Ovary (tissue), 10 donors: ENCODE measurements at regions of chrX and their contacts with region 1.

Region 1: DNA sequence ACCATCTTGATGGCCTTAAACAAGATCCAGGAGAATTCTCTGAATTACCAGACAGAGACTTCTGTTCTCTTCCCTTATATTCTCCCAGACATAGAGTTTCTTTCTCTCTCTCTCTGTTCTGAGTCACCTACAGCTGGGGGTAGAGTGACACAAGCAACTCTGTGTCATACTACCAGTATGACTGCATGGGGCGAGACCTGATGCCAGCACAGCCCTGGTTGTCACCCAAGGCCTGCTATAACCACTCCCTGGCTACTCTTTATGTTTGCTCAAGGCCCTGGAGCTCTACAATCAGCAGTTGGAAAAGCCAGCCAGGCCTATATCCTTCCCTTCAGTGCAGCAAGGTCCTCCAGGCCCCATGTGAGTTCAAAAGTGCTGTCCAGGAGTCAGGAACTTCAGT is 114.2 kb upstream of the TENT5D start:
- DNase-seq: no peak
- H3K4me3 ChIP-seq: no peak overlapping the region
- H3K27ac ChIP-seq: no peak overlapping the region
- H3K4me1 ChIP-seq: no peaks in the 10 kb centered on the region
- H3K27me3 ChIP-seq: no peaks in the 10 kb centered on the region
- CTCF ChIP-seq: no peak
- EP300 ChIP-seq: no peak
- POLR2A ChIP-seq: no peak

Region 2: DNA sequence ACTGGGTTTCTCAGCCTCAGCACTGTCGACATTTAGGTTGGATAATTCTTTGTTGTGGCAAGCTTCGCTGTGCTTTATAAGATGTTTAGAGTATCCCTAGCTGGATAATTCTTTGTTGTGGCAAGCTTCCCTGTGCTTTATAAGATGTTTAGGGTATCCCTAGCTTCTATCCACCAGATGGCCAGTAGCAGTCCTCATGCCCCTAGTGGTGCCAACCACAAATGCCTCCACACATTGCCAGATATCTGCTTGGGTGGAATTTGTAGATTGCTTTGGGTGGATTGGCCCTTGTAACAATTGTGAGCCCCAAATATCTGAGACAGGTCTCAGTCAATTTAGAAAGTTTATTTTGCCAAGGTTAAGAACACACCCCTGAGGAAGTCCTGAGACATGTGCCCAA is 97.5 kb after region 1 on chrX:
- intact Hi-C with region 1: no loop called
- DNase-seq: no peak
- H3K4me3 ChIP-seq: no peak overlapping the region
- H3K27ac ChIP-seq: no peak overlapping the region
- H3K4me1 ChIP-seq: no peaks in the 10 kb centered on the region
- H3K27me3 ChIP-seq: no peaks in the 10 kb centered on the region
- CTCF ChIP-seq: no peak
- EP300 ChIP-seq: no peak
- POLR2A ChIP-seq: no peak

Region 3: DNA sequence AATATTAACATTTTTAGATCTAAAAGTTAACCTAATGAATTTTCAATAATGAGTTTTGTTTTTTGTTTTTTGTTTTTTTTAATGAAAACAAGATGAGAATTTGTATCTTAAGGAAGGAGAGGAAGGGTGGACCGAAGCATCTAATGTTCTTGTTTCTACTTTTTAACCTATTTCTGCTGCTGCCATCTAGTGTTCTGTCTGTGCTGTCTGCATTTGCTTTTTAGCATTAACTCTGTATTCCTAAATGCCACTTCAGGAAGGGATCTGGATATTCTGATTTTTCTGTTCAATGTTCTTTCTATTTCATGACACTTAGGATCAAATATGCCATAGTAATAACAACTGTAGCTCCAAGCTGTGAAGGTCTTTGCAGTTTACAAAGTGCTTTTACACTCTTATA is 342.0 kb after region 1 on chrX:
- intact Hi-C with region 1: no loop called
- DNase-seq: no peak
- H3K4me3 ChIP-seq: no peak overlapping the region
- H3K27ac ChIP-seq: no peak overlapping the region
- H3K4me1 ChIP-seq: no peaks in the 10 kb centered on the region
- H3K27me3 ChIP-seq: no peaks in the 10 kb centered on the region
- CTCF ChIP-seq: no peak
- EP300 ChIP-seq: no peak
- POLR2A ChIP-seq: no peak

Region 4: GRCh38 chrX:80667967-80668366 is 362.0 kb after region 1 on chrX:
- intact Hi-C with region 1: no loop called
- DNase-seq: no peak
- H3K4me3 ChIP-seq: no peak overlapping the region
- H3K27ac ChIP-seq: no peak overlapping the region
- H3K4me1 ChIP-seq: no peaks in the 10 kb centered on the region
- H3K27me3 ChIP-seq: no peaks in the 10 kb centered on the region
- CTCF ChIP-seq: no peak
- EP300 ChIP-seq: no peak
- POLR2A ChIP-seq: no peak

Region 5: GRCh38 chrX:81201671-81202455 is 895.9 kb after region 1 on chrX and contains the starts of genes HMGN5 and SH3BGRL:
- intact Hi-C with region 1: loop called in 1 of 4 experiments (anchors 5 kb)
- DNase-seq: peak; percentile 82 to 87 (median 82)
- H3K4me3 ChIP-seq: peak within 1 kb of the TSS; percentile 53
- H3K27ac ChIP-seq: peak within 1 kb of the TSS in 1 of 2 donors; percentile 41
- H3K4me1 ChIP-seq: no peaks in the 10 kb centered on the region
- H3K27me3 ChIP-seq: no peaks in the 10 kb centered on the region
- CTCF ChIP-seq: no peak
- EP300 ChIP-seq: no peak
- POLR2A ChIP-seq: no peak
- total RNA-seq, gene HMGN5: 3.8 to 11.5 (median 8.0) TPM
- total RNA-seq, gene SH3BGRL: 88.3 to 147 (median 111) TPM